ENCODE measurements at regions of chr6 and their contacts with region 1.

Region 1: GRCh38 chr6:4155848-4156466 is 20.6 kb upstream of the ECI2 start:
- DNase-seq: peak; percentile 24 to 90
- H3K4me3 ChIP-seq: no peak overlapping the region
- H3K27ac ChIP-seq: no peak overlapping the region
- H3K4me1 ChIP-seq: no peaks in the 10 kb centered on the region
- H3K27me3 ChIP-seq: no peaks in the 10 kb centered on the region
- CTCF ChIP-seq: peak; percentile 60 to 88 (median 75)

Region 2: GRCh38 chr6:4055420-4056041 is 100.4 kb before region 1 on chr6:
- intact Hi-C with region 1: loop called (anchors 1 kb)
- DNase-seq: no peak
- H3K4me3 ChIP-seq: no peak overlapping the region
- H3K27ac ChIP-seq: peak overlapping the region in 1 of 2 donors; percentile 47
- H3K4me1 ChIP-seq: no peaks in the 10 kb centered on the region
- H3K27me3 ChIP-seq: no peaks in the 10 kb centered on the region
- CTCF ChIP-seq: peak in 2 of 3 experiments; percentile 23 to 46

Region 3: DNA sequence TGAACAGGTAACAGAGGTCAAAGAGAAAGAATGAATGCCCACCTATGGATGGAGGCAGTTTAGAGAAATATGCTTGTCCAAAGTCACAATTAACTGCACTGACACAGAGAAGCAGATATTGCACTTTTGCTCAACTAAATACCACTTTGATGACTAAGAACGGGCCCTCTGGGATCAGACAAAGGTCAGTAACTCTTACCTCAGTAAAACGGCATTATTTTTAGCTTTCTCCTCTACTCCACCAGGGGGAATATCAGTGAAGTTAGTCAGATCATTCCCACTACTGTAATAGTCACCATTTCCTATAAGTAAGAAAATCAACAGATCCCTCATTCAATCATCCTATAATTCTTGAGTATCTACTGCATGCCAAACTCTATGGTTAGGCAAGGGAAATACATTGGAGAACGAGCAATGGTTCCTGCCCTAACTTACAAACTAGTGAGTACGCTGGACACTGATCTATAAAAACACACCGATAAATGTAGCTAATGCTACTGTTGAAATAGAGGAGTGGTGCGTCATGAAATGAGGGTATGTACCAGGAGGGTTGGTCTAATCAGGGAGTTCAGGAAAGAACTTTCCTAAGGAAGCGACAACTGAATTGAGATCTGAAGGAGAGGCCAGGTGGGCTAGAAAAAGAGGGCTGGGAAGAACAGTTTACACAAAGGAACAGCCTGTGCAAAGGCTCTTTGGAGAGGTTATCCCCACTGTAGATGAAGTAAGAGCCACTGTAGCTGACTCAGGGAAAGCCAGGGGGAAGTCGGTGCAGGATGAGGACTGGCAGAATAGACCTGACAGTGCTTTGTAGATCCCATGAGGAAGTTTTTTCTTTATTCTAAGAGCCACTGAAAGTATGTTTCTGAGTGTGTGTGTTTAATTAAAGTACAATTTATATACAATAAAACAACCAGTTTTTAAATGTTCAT is 29.8 kb before region 1 on chr6:
- intact Hi-C with region 1: loop called (anchors 2 kb)
- DNase-seq: no peak
- H3K4me3 ChIP-seq: no peak overlapping the region
- H3K27ac ChIP-seq: peak overlapping the region in 1 of 2 donors; percentile 29
- H3K4me1 ChIP-seq: no peaks in the 10 kb centered on the region
- H3K27me3 ChIP-seq: no peaks in the 10 kb centered on the region
- CTCF ChIP-seq: peak in 2 of 3 experiments; percentile 8 to 10

Measured in ascending aorta (tissue), 2 donors.